ENCODE measurements at regions of chr12 and their contacts with region 1.

Region 1: DNA sequence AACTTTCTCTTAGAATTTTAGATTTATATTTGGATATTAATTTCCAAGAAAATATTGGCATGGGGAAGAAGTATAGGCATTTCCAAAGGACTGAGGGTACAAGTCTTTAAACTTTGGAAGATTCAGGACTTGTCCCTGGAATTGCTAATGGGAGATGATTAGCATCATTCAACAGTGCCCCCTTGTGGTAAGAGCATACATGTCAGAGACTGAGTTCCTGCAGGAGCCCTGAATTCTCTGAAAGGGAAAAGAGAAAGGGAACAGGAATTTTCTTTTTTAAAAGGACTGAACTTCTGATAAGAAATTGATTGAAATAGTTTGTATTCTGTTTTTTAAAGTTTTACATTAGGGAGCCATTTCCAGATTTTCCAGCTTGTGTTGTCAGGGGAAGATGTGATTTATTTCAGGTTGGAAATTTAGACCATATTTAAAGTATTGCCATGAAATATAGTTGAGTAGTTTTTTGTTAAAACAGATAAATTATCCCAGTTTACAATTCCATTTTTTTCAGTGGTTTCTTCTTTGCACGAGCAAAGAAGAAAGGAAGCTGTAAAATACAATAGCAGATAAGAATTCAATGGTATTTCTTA is 44.0 kb upstream of the REP15 start:
- DNase-seq: peak; percentile 24
- ATAC-seq: peak; percentile 67 to 77

Region 2: GRCh38 chr12:27332407-27333301 is 319.6 kb before region 1 on chr12 and contains the start of gene BMAL2:
- intact Hi-C with region 1: loop called in 1 of 2 experiments (anchors 10 kb)
- DNase-seq: peak; percentile 55
- ATAC-seq: peak; percentile 66 to 83
- total RNA-seq, gene BMAL2: 1.3 to 4.8 TPM

Region 3: DNA sequence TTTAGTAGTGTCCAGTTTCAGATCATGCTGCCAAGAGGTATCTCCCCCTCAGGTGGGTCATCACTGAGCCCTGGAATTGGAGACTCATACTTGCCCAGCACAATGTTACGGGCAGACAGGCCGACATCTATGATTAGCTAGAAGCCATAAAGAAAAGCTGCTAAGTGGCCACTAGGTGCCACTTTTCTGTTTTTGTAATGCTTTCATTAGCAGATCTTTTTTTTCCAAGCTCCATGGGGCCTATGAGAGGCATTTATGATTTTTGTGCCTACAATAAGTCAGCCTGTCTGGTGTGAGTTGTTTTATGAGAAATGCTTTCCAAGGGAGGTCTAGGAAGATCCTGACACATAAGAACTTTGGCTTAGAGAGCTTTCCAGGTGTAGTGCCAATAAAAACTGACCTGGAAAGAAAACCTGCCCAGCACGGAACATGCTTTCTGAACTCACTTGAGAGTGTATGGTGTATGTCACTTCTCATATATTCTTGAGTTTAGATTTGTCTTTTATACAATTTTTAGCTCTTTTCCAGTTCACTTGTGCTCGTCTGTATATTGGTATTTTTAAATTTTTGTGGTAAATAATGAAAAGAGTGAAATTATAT is 227.5 kb before region 1 on chr12:
- intact Hi-C with region 1: loop called in 1 of 2 experiments (anchors 5 kb)
- DNase-seq: no peak
- ATAC-seq: peak; percentile 78 to 92

Region 4: GRCh38 chr12:27595231-27595642 is 57.0 kb before region 1 on chr12:
- intact Hi-C with region 1: no loop called
- DNase-seq: no peak
- ATAC-seq: peak; percentile 53 to 64